PC-9 (cell line): ENCODE measurements at regions of chr2 and their contacts with region 1.

Region 1: GRCh38 chr2:47719099-47719498 is 63.8 kb upstream of the MSH6 start:
- DNase-seq: no peak
- H3K4me3 ChIP-seq: no peak overlapping the region
- H3K27ac ChIP-seq: no peak overlapping the region
- H3K4me1 ChIP-seq: no peaks in the 10 kb centered on the region
- H3K27me3 ChIP-seq: no peaks in the 10 kb centered on the region
- CTCF ChIP-seq: no peak

Region 2: GRCh38 chr2:47313141-47313691 is 405.9 kb before region 1 on chr2:
- CTCF ChIA-PET with region 1: no interaction called
- POLR2A ChIA-PET with region 1: no interaction called
- intact Hi-C with region 1: no loop called
- DNase-seq: peak; percentile 67 to 93
- H3K4me3 ChIP-seq: peak overlapping the region; percentile 20; the same call in 1 of the 2 replicates
- H3K27ac ChIP-seq: peak overlapping the region; percentile 96
- H3K4me1 ChIP-seq: peaks cover 57% of the 10 kb centered on the region
- H3K27me3 ChIP-seq: no peaks in the 10 kb centered on the region
- CTCF ChIP-seq: no peak

Region 3: GRCh38 chr2:47501374-47502200 is 217.5 kb before region 1 on chr2:
- CTCF ChIA-PET with region 1: interaction called, 11 read pairs
- POLR2A ChIA-PET with region 1: no interaction called
- intact Hi-C with region 1: no loop called
- DNase-seq: peak in 1 of 2 experiments; percentile 70
- H3K4me3 ChIP-seq: no peak overlapping the region
- H3K27ac ChIP-seq: peak overlapping the region; percentile 59
- H3K4me1 ChIP-seq: peaks cover 19% of the 10 kb centered on the region
- H3K27me3 ChIP-seq: no peaks in the 10 kb centered on the region
- CTCF ChIP-seq: no peak

Region 4: GRCh38 chr2:47602996-47603395 is 116.1 kb before region 1 on chr2:
- CTCF ChIA-PET with region 1: no interaction called
- POLR2A ChIA-PET with region 1: no interaction called
- intact Hi-C with region 1: no loop called
- DNase-seq: peak in 1 of 2 experiments; percentile 60
- H3K4me3 ChIP-seq: no peak overlapping the region
- H3K27ac ChIP-seq: no peak overlapping the region
- H3K4me1 ChIP-seq: peaks cover 12% of the 10 kb centered on the region
- H3K27me3 ChIP-seq: no peaks in the 10 kb centered on the region
- CTCF ChIP-seq: no peak

Region 5: GRCh38 chr2:47819834-47820233 is 100.7 kb after region 1 on chr2:
- CTCF ChIA-PET with region 1: no interaction called
- POLR2A ChIA-PET with region 1: no interaction called
- intact Hi-C with region 1: no loop called
- DNase-seq: peak in 1 of 2 experiments; percentile 57
- H3K4me3 ChIP-seq: no peak overlapping the region
- H3K27ac ChIP-seq: peak overlapping the region; percentile 18; the same call in 1 of the 2 replicates
- H3K4me1 ChIP-seq: peaks cover 10% of the 10 kb centered on the region
- H3K27me3 ChIP-seq: no peaks in the 10 kb centered on the region
- CTCF ChIP-seq: no peak

Region 6: DNA sequence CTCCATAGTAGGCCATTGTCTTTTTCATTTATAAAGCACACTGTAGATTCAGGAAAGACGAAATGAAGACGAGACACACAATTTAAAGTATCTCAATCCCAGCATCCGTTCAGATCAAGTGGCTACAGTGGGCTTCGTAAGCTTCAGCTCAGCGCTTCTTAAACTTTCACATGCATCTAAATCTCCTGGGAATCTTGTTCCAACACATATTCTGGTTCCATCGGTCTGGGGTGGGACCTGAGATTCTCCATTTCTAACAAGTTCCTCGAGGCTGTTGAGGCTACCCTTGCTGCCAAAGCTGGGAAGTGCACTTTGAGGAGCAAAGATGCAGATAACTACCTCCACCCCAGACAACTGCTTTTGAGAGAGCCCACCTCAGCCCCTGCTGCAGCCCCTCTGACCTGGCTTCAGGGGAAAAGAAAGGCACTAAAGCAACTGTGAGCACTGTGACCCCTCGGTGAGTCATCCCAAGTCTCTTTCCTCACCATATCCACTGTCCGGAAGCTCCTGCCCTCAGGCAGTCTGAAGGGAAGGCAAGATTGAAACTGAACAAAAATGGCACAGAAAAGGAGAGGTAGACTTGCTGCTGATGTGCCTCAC is 388.3 kb after region 1 on chr2:
- CTCF ChIA-PET with region 1: no interaction called
- POLR2A ChIA-PET with region 1: no interaction called
- intact Hi-C with region 1: no loop called
- DNase-seq: peak; percentile 64 to 73
- H3K4me3 ChIP-seq: no peak overlapping the region
- H3K27ac ChIP-seq: peak overlapping the region; percentile 71
- H3K4me1 ChIP-seq: peaks cover 53% of the 10 kb centered on the region
- H3K27me3 ChIP-seq: no peaks in the 10 kb centered on the region
- CTCF ChIP-seq: no peak